K562 (cell line): ENCODE measurements at regions of chr21 and their contacts with region 1.

Region 1: GRCh38 chr21:33199516-33200217 is 30.1 kb upstream of the IFNAR2 start:
- DNase-seq: peak; percentile 77 to 92 (median 78)
- ATAC-seq: peak; percentile 91
- H3K4me3 ChIP-seq: no peak overlapping the region
- H3K27ac ChIP-seq: no peak overlapping the region
- H3K4me1 ChIP-seq: peaks cover 2 to 12% of the 10 kb centered on the region in 2 experiments; a peak in 4 of 5 replicates
- H3K27me3 ChIP-seq: peaks cover 6 to 14% of the 10 kb centered on the region in 2 experiments
- CTCF ChIP-seq: peak; percentile 86 to 96 (median 91)
- EP300 ChIP-seq: 0 out of 2 replicates have a peak, but pooled peaks have one; percentile 35
- POLR2A ChIP-seq: no peak
- RAD21 ChIP-seq: peak; percentile 99 to 100

Region 2: DNA sequence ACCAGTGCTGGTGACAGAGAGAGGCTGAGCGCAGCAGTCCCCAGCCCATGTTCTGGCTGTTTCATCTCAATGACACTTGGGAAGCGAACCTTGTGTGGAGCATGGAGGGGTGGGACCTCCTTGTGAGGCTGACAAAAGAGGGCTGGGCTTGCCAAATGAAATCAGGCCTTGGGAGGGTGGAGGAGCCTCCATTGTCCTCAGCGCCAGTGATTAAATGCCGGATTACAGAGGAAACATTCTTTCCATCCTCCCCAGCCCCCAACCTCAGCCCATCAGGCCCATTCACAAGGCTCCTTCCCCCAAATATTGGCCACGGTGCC is 364.8 kb before region 1 on chr21:
- CTCF ChIA-PET with region 1: no interaction called
- POLR2A ChIA-PET with region 1: no interaction called
- in situ Hi-C with region 1: loop called (anchors 5 kb)
- intact Hi-C with region 1: loop called (anchors 5 kb)
- DNase-seq: no peak
- ATAC-seq: no peak
- H3K4me3 ChIP-seq: no peak overlapping the region
- H3K27ac ChIP-seq: no peak overlapping the region
- H3K4me1 ChIP-seq: peaks cover 0 to 3% of the 10 kb centered on the region in 2 experiments; a peak in 1 of 5 replicates
- H3K27me3 ChIP-seq: peaks cover 12 to 15% of the 10 kb centered on the region in 2 experiments
- CTCF ChIP-seq: no peak
- EP300 ChIP-seq: no peak
- POLR2A ChIP-seq: no peak
- RAD21 ChIP-seq: no peak

Region 3: GRCh38 chr21:32994305-32994704 is 205.4 kb before region 1 on chr21:
- CTCF ChIA-PET with region 1: interaction called, 6 read pairs
- POLR2A ChIA-PET with region 1: no interaction called
- in situ Hi-C with region 1: no loop called
- intact Hi-C with region 1: loop called (anchors 1 kb)
- DNase-seq: peak; percentile 20 to 25 (median 24)
- ATAC-seq: peak; percentile 36; the same call in 1 of the 3 replicates
- H3K4me3 ChIP-seq: no peak overlapping the region
- H3K27ac ChIP-seq: no peak overlapping the region
- H3K4me1 ChIP-seq: no peaks in the 10 kb centered on the region
- H3K27me3 ChIP-seq: peaks cover 3 to 7% of the 10 kb centered on the region in 2 experiments; a peak in 2 of 5 replicates
- CTCF ChIP-seq: peak; percentile 35 to 66 (median 40); a peak in 3 of 6 replicates
- EP300 ChIP-seq: no peak
- POLR2A ChIP-seq: no peak
- RAD21 ChIP-seq: peak; percentile 44 to 67

Region 4: DNA sequence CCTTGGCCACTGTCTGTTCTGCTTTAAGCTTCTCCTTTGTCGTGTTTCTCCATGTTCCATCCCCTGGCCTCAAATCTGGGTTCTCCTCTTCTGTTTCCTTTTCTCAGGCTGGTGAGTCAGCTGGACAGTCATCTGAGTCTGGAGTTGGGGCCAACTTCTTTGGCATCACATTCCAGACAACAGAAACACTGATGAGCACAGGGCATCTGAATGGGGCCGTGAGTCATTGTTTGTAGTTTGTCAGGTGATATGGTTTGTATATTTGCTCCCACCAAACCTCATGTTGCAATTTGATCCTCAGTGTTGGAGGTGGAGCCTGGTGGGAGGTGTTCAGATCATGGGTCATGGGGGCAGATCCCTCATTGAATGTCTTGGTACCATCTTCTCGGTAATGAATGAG is 188.2 kb before region 1 on chr21:
- CTCF ChIA-PET with region 1: no interaction called
- POLR2A ChIA-PET with region 1: no interaction called
- in situ Hi-C with region 1: no loop called
- intact Hi-C with region 1: no loop called
- DNase-seq: no peak
- ATAC-seq: no peak
- H3K4me3 ChIP-seq: no peak overlapping the region
- H3K27ac ChIP-seq: no peak overlapping the region
- H3K4me1 ChIP-seq: no peaks in the 10 kb centered on the region
- H3K27me3 ChIP-seq: peaks cover 0 to 11% of the 10 kb centered on the region in 2 experiments; a peak in 3 of 5 replicates
- CTCF ChIP-seq: no peak
- EP300 ChIP-seq: no peak
- POLR2A ChIP-seq: no peak
- RAD21 ChIP-seq: no peak

Region 5: DNA sequence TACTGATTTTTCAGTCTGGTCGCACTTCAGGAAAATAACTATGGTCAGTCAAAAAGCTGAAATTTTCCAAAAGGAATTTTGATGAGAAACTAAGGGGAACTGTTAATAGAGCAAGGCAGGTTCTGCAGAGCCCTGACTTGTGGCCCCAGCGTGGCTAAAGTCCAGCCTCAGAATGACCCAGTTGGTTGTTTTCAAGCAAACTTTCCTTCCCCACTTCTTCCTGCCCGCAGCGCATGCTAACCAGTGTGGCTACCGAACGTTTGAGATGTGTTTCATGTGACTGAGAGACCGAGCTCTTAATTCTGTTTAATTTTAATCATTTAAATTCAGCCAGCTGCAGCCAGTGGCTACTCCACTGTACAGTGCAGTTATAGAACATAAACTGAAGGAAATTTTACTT is 60.3 kb after region 1 on chr21:
- CTCF ChIA-PET with region 1: no interaction called
- POLR2A ChIA-PET with region 1: no interaction called
- in situ Hi-C with region 1: loop called (anchors 5 kb)
- intact Hi-C with region 1: loop called (anchors 5 kb)
- DNase-seq: no peak
- ATAC-seq: no peak
- H3K4me3 ChIP-seq: no peak overlapping the region
- H3K27ac ChIP-seq: no peak overlapping the region
- H3K4me1 ChIP-seq: no peaks in the 10 kb centered on the region
- H3K27me3 ChIP-seq: no peaks in the 10 kb centered on the region
- CTCF ChIP-seq: no peak
- EP300 ChIP-seq: no peak
- POLR2A ChIP-seq: no peak
- RAD21 ChIP-seq: no peak

Region 6: GRCh38 chr21:33308586-33309490 is 109.2 kb after region 1 on chr21:
- CTCF ChIA-PET with region 1: no interaction called
- POLR2A ChIA-PET with region 1: no interaction called
- in situ Hi-C with region 1: no loop called
- intact Hi-C with region 1: loop called (anchors 2 kb)
- DNase-seq: peak in 1 of 4 experiments; percentile 51
- ATAC-seq: peak; percentile 52; the same call in 2 of the 3 replicates
- H3K4me3 ChIP-seq: no peak overlapping the region
- H3K27ac ChIP-seq: no peak overlapping the region
- H3K4me1 ChIP-seq: peaks cover 13 to 18% of the 10 kb centered on the region in 2 experiments
- H3K27me3 ChIP-seq: no peaks in the 10 kb centered on the region
- CTCF ChIP-seq: peak in 2 of 3 experiments; percentile 36 to 68; a peak in 2 of 6 replicates
- EP300 ChIP-seq: no peak; the same call in 1 of the 2 replicates
- POLR2A ChIP-seq: no peak
- RAD21 ChIP-seq: peak; percentile 33 to 49; a peak in 3 of 4 replicates

Region 7: DNA sequence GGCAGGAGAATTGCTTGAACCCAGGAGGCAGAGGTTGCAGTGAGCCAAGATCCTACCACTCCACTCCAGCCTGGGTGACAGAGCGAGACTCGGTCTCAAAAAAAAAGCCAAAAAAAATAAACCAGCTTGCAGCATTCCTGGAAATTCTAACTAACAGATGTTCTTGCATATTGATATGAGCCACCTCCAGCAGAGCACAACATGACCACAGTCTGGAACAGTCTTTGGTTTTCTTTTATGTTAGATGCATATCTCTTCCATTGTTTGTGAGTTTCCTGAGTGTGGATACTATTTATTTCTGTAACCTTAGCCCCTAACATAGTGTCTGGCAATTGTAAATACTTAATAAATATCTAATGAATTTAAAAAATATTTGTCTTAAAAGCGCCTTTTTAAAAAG is 149.0 kb after region 1 on chr21:
- CTCF ChIA-PET with region 1: no interaction called
- POLR2A ChIA-PET with region 1: no interaction called
- in situ Hi-C with region 1: no loop called
- intact Hi-C with region 1: no loop called
- DNase-seq: no peak
- ATAC-seq: no peak
- H3K4me3 ChIP-seq: no peak overlapping the region
- H3K27ac ChIP-seq: no peak overlapping the region
- H3K4me1 ChIP-seq: no peaks in the 10 kb centered on the region
- H3K27me3 ChIP-seq: no peaks in the 10 kb centered on the region
- CTCF ChIP-seq: no peak
- EP300 ChIP-seq: no peak
- POLR2A ChIP-seq: no peak
- RAD21 ChIP-seq: no peak

Region 8: DNA sequence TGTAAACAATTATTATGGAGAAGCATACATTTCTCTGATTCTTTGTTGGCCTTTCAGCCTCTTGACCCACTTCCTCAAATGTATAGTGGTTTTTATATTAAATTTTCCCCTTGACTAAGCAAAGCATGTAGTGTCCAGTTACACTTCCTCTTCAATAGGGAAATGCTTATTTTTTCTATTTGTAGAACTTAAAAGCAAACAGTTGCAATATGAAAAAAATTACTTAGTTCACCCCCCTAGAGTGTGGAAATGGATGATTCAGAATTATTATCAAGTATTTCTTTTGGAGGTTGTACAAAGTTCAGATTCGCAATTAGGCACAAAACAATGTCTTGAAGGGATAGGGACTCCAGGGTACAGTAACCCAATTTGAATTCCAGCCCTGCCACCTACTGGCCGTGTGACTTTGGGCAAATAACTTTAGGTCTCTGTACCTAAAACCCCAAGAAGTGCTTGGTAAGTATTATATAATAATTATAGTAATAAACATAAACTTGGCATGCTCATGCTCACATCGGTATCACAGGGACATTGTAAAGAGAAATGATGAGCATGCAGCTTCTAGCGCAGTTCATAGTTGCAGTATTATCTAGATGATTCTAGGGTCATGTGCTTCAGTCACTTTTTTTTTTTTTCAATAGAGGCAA is 174.9 kb after region 1 on chr21:
- CTCF ChIA-PET with region 1: interaction called, 47 read pairs
- POLR2A ChIA-PET with region 1: no interaction called
- in situ Hi-C with region 1: loop called (anchors 5 kb)
- intact Hi-C with region 1: loop called (anchors 1 kb)
- DNase-seq: peak in 3 of 4 experiments; percentile 36 to 77 (median 55)
- ATAC-seq: peak; percentile 94
- H3K4me3 ChIP-seq: no peak overlapping the region
- H3K27ac ChIP-seq: no peak overlapping the region
- H3K4me1 ChIP-seq: peaks cover 0 to under 1% of the 10 kb centered on the region in 2 experiments; a peak in 1 of 5 replicates
- H3K27me3 ChIP-seq: peaks cover 6 to 14% of the 10 kb centered on the region in 2 experiments; a peak in 2 of 5 replicates
- CTCF ChIP-seq: peak; percentile 75 to 96 (median 84)
- EP300 ChIP-seq: no peak
- POLR2A ChIP-seq: no peak
- RAD21 ChIP-seq: peak; percentile 95 to 96

Region 9: GRCh38 chr21:33608559-33608958 is 408.9 kb after region 1 on chr21:
- CTCF ChIA-PET with region 1: interaction called, 5 read pairs
- POLR2A ChIA-PET with region 1: interaction called, 3 read pairs
- in situ Hi-C with region 1: loop called (anchors 10 kb)
- intact Hi-C with region 1: loop called (anchors 1 kb)
- DNase-seq: no peak
- ATAC-seq: no peak
- H3K4me3 ChIP-seq: no peak overlapping the region
- H3K27ac ChIP-seq: no peak overlapping the region
- H3K4me1 ChIP-seq: no peaks in the 10 kb centered on the region
- H3K27me3 ChIP-seq: no peaks in the 10 kb centered on the region
- CTCF ChIP-seq: no peak
- EP300 ChIP-seq: no peak
- POLR2A ChIP-seq: no peak
- RAD21 ChIP-seq: no peak